Caco-2 (cell line): ENCODE measurements at regions of chr3 and their contacts with region 1.

Region 1: GRCh38 chr3:182212479-182213076 is 500.9 kb downstream of the SOX2 start:
- DNase-seq: peak; percentile 89 to 93
- H3K4me3 ChIP-seq: no peak overlapping the region
- H3K4me3 Mint-ChIP-seq: no peak overlapping the region
- H3K27ac Mint-ChIP-seq: peak overlapping the region; percentile 75
- H3K4me1 ChIP-seq: peaks cover 43% of the 10 kb centered on the region
- H3K4me1 Mint-ChIP-seq: peaks cover 37% of the 10 kb centered on the region
- H3K27me3 ChIP-seq: no peaks in the 10 kb centered on the region
- H3K27me3 Mint-ChIP-seq: no peaks in the 10 kb centered on the region
- CTCF ChIP-seq: no peak

Region 2: DNA sequence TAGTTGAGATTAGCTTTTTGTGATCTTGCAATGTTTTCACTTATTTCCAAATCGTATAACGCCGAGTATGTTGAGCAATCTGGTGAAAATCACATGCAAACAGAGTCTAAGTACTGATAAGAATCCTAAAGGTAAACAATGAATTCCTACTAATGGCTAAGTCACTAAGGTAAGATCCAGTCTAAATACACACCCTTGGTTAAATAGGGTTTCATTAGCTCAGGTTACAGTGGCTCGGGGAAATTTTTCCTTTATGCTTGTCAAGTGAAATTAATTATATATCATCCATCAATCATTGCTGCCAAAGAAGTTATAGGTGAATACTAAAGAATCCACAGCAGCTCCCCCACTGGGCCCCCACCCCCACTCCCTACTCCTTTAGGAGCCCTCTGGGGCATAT is 361.5 kb before region 1 on chr3:
- CTCF ChIA-PET with region 1: interaction called, 3 read pairs
- POLR2A ChIA-PET with region 1: no interaction called
- intact Hi-C with region 1: loop called (anchors 1 kb)
- DNase-seq: peak; percentile 61 to 69
- H3K4me3 ChIP-seq: no peak overlapping the region
- H3K4me3 Mint-ChIP-seq: peak overlapping the region; percentile 35
- H3K27ac Mint-ChIP-seq: peak overlapping the region; percentile 87
- H3K4me1 ChIP-seq: peaks cover 26% of the 10 kb centered on the region
- H3K4me1 Mint-ChIP-seq: peaks cover 22% of the 10 kb centered on the region
- H3K27me3 ChIP-seq: no peaks in the 10 kb centered on the region
- H3K27me3 Mint-ChIP-seq: no peaks in the 10 kb centered on the region
- CTCF ChIP-seq: no peak

Region 3: GRCh38 chr3:182148360-182148759 is 64.2 kb before region 1 on chr3:
- CTCF ChIA-PET with region 1: no interaction called
- POLR2A ChIA-PET with region 1: no interaction called
- intact Hi-C with region 1: loop called (anchors 1 kb)
- DNase-seq: peak; percentile 45 to 49
- H3K4me3 ChIP-seq: no peak overlapping the region
- H3K4me3 Mint-ChIP-seq: no peak overlapping the region
- H3K27ac Mint-ChIP-seq: peak overlapping the region; percentile 76
- H3K4me1 ChIP-seq: peaks cover 18% of the 10 kb centered on the region
- H3K4me1 Mint-ChIP-seq: peaks cover 7% of the 10 kb centered on the region
- H3K27me3 ChIP-seq: no peaks in the 10 kb centered on the region
- H3K27me3 Mint-ChIP-seq: no peaks in the 10 kb centered on the region
- CTCF ChIP-seq: no peak

Region 4: DNA sequence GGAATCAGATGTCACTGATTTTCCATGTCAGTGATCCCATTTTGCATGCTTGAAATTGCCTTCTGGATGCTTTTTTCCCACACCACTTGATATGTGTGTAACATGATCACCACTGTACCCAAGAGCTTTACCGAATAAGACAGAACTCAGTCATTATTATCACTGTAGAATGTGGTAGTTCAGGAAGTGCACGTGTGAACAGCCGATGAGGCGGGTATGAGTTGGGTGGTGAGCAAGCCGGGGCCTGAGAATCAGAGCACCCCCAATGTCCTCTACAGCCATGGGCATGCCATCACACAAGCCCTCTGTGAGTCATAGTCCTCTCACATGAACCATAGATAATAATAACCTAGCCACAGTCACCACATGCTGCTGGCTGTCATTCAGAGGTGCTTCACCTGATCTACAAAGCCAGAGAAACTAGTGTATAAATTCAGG is 30.0 kb before region 1 on chr3:
- CTCF ChIA-PET with region 1: interaction called, 6 read pairs
- POLR2A ChIA-PET with region 1: interaction called, 7 read pairs
- intact Hi-C with region 1: loop called (anchors 1 kb)
- DNase-seq: no peak
- H3K4me3 ChIP-seq: no peak overlapping the region
- H3K4me3 Mint-ChIP-seq: no peak overlapping the region
- H3K27ac Mint-ChIP-seq: peak overlapping the region; percentile 73
- H3K4me1 ChIP-seq: peaks cover 62% of the 10 kb centered on the region
- H3K4me1 Mint-ChIP-seq: peaks cover 58% of the 10 kb centered on the region
- H3K27me3 ChIP-seq: no peaks in the 10 kb centered on the region
- H3K27me3 Mint-ChIP-seq: no peaks in the 10 kb centered on the region
- CTCF ChIP-seq: no peak

Region 5: GRCh38 chr3:182392182-182392937 is 179.8 kb after region 1 on chr3:
- CTCF ChIA-PET with region 1: interaction called, 3 read pairs
- POLR2A ChIA-PET with region 1: no interaction called
- intact Hi-C with region 1: loop called (anchors 1 kb)
- DNase-seq: no peak
- H3K4me3 ChIP-seq: no peak overlapping the region
- H3K4me3 Mint-ChIP-seq: no peak overlapping the region
- H3K27ac Mint-ChIP-seq: no peak overlapping the region
- H3K4me1 ChIP-seq: peaks cover 16% of the 10 kb centered on the region
- H3K4me1 Mint-ChIP-seq: peaks cover 24% of the 10 kb centered on the region
- H3K27me3 ChIP-seq: no peaks in the 10 kb centered on the region
- H3K27me3 Mint-ChIP-seq: no peaks in the 10 kb centered on the region
- CTCF ChIP-seq: no peak